CD8-positive, alpha-beta T cell (primary cell): ENCODE measurements at regions of chr6 and their contacts with region 1.

Region 1: DNA sequence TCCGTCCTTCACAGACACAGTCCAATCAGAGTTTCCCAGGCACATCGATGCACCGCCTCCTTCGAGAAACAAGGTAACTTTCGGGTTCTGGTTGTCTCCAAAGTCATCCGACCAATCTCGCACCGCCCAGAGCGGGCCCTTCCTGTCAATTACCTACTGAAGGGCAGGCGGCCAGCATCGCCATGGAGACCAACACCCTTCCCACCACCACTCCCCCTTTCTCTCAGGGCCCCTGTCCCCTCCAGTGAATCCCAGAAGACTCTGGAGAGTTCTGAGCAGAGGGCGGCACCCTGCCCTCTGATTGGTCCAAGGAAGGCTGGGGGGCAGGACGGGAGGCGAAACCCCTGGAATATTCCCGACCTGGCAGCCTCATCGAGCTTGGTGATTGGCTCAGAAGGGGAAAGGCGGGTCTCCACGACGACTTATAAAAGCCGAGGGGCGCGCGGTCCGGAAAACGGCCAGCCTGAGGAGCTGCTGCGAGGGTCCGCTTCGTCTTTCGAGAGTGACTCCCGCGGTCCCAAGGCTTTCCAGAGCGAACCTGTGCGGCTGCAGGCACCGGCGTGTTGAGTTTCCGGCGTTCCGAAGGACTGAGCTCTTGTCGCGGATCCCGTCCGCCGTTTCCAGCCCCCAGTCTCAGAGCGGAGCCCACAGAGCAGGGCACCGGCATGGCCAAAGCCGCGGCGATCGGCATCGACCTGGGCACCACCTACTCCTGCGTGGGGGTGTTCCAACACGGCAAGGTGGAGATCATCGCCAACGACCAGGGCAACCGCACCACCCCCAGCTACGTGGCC is at the start of gene HSPA1B:
- DNase-seq: peak; percentile 56 to 91 (median 85)
- ATAC-seq: peak; percentile 63
- H3K4me3 ChIP-seq: peak within 1 kb of the TSS; percentile 60 to 95
- H3K4me3 Mint-ChIP-seq: peak within 1 kb of the TSS; percentile 96
- H3K27ac ChIP-seq: peak within 1 kb of the TSS; percentile 66 to 72
- H3K27ac Mint-ChIP-seq: peak within 1 kb of the TSS; percentile 94
- H3K4me1 ChIP-seq: peaks cover 25% of the 10 kb centered on the region
- H3K4me1 Mint-ChIP-seq: peaks cover 38% of the 10 kb centered on the region
- H3K27me3 ChIP-seq: no peaks in the 10 kb centered on the region
- H3K27me3 Mint-ChIP-seq: no peaks in the 10 kb centered on the region
- CTCF ChIP-seq: no peak
- total RNA-seq, gene HSPA1B: 4.9 to 5.2 TPM

Region 2: GRCh38 chr6:31271641-31272357 is 555.7 kb before region 1 on chr6 and contains the start of gene HLA-C:
- CTCF ChIA-PET with region 1: no interaction called
- POLR2A ChIA-PET with region 1: no interaction called
- intact Hi-C with region 1: no loop called
- DNase-seq: peak; percentile 79 to 98 (median 92)
- ATAC-seq: peak; percentile 85
- H3K4me3 ChIP-seq: peak within 1 kb of the TSS; percentile 82 to 86
- H3K4me3 Mint-ChIP-seq: peak within 1 kb of the TSS; percentile 95
- H3K27ac ChIP-seq: peak within 1 kb of the TSS; percentile 93 to 98
- H3K27ac Mint-ChIP-seq: peak within 1 kb of the TSS; percentile 100
- H3K4me1 ChIP-seq: peaks cover 43% of the 10 kb centered on the region
- H3K4me1 Mint-ChIP-seq: peaks cover 56% of the 10 kb centered on the region
- H3K27me3 ChIP-seq: no peaks in the 10 kb centered on the region
- H3K27me3 Mint-ChIP-seq: no peaks in the 10 kb centered on the region
- CTCF ChIP-seq: no peak
- total RNA-seq, gene HLA-C: 2,677 to 2,722 TPM

Region 3: DNA sequence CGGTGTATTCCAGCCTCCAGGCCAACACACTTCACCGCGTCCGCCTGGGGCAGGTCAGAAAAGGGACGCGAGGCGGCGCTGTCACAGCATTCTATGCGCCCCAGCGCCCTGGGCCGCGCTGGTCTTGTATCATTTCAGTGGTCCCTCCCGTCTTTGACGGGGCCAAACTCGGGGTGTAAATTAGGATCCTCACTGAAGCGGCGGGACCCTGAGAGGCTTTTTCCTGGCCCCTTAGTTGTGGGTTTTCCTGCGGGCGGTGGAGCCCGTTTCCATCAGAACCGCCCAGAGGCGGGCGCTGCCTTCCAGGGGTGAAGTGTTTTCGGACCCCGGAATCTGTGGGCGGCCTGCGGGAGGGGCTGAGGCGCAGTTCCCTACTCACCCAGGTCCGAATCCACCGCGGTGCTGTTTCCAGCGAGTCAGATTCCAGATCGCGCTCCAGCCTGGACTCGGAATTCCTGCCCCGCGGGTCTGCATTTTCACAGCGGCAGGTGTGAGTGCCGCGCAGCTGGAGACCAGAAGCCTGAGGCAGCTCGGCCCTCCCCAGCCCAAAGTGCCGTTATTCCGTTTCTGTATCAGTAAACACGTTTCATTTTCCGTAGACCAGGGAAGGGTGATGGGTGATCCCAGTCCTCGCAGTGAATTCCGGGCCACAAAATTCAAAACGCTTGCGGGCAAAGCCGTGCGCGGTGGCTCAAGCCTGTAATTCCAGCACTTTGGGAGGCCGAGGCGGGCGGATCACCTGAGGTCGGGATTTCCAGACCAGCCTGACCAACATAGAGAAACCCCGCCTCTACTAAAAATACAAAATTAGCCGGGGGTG is 333.4 kb before region 1 on chr6:
- CTCF ChIA-PET with region 1: no interaction called
- POLR2A ChIA-PET with region 1: no interaction called
- intact Hi-C with region 1: loop called (anchors 2 to 5 kb)
- DNase-seq: peak; percentile 62 to 90 (median 76)
- ATAC-seq: peak; percentile 32
- H3K4me3 ChIP-seq: peak overlapping the region; percentile 65 to 81
- H3K4me3 Mint-ChIP-seq: peak overlapping the region; percentile 77
- H3K27ac ChIP-seq: peak overlapping the region; percentile 29 to 71
- H3K27ac Mint-ChIP-seq: peak overlapping the region; percentile 91
- H3K4me1 ChIP-seq: peaks cover 41% of the 10 kb centered on the region
- H3K4me1 Mint-ChIP-seq: peaks cover 49% of the 10 kb centered on the region
- H3K27me3 ChIP-seq: no peaks in the 10 kb centered on the region
- H3K27me3 Mint-ChIP-seq: no peaks in the 10 kb centered on the region
- CTCF ChIP-seq: peak; percentile 83

Region 4: GRCh38 chr6:31652925-31653718 is 174.4 kb before region 1 on chr6:
- CTCF ChIA-PET with region 1: interaction called, 9 read pairs
- POLR2A ChIA-PET with region 1: interaction called, 21 read pairs
- intact Hi-C with region 1: no loop called
- DNase-seq: peak in 4 of 9 experiments; percentile 77 to 92 (median 88)
- ATAC-seq: peak; percentile 70
- H3K4me3 ChIP-seq: peak overlapping the region; percentile 78 to 82
- H3K4me3 Mint-ChIP-seq: peak overlapping the region; percentile 92
- H3K27ac ChIP-seq: peak overlapping the region; percentile 94 to 96
- H3K27ac Mint-ChIP-seq: peak overlapping the region; percentile 100
- H3K4me1 ChIP-seq: peaks cover 32% of the 10 kb centered on the region
- H3K4me1 Mint-ChIP-seq: peaks cover 59% of the 10 kb centered on the region
- H3K27me3 ChIP-seq: no peaks in the 10 kb centered on the region
- H3K27me3 Mint-ChIP-seq: no peaks in the 10 kb centered on the region
- CTCF ChIP-seq: no peak

Region 5: DNA sequence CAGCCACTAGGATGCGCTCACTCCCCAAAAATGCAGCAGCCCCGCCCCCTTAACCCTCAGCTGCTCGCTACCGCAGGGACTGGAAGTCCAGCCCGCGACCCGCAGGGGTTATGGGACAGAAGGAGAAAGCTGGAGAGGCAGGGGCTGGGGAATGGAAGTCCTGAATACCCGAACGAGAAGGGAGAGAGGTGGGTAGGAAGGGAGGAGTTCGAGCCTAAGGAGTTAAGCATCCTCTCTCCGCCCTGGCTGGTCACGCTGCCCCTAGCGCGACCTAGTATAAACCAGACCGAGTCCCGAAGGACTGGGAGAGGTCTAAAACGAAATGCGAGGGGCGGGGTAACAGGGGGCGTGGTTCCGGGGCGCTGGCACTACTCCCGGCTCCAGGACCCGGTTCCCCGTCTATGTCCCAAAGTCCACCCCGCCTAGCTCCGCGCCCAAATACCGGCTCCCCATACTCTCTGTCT is 97.9 kb before region 1 on chr6:
- CTCF ChIA-PET with region 1: interaction called, 74 read pairs
- POLR2A ChIA-PET with region 1: interaction called, 12 read pairs
- intact Hi-C with region 1: loop called (anchors 1 kb)
- DNase-seq: peak; percentile 60 to 89 (median 83)
- ATAC-seq: peak; percentile 69
- H3K4me3 ChIP-seq: peak overlapping the region; percentile 79 to 96
- H3K4me3 Mint-ChIP-seq: peak overlapping the region; percentile 97
- H3K27ac ChIP-seq: peak overlapping the region; percentile 11 to 58
- H3K27ac Mint-ChIP-seq: peak overlapping the region; percentile 89
- H3K4me1 ChIP-seq: peaks cover 35% of the 10 kb centered on the region
- H3K4me1 Mint-ChIP-seq: peaks cover 57% of the 10 kb centered on the region
- H3K27me3 ChIP-seq: no peaks in the 10 kb centered on the region
- H3K27me3 Mint-ChIP-seq: no peaks in the 10 kb centered on the region
- CTCF ChIP-seq: peak; percentile 91

Region 6: GRCh38 chr6:31806465-31807272 is 20.8 kb before region 1 on chr6 and contains the start of gene LSM2:
- CTCF ChIA-PET with region 1: interaction called, 11 read pairs
- POLR2A ChIA-PET with region 1: interaction called, 6 read pairs
- intact Hi-C with region 1: loop called in 1 of 2 experiments (anchors 1 kb)
- DNase-seq: peak; percentile 92 to 99 (median 97)
- ATAC-seq: peak; percentile 99
- H3K4me3 ChIP-seq: peak within 1 kb of the TSS; percentile 61 to 95
- H3K4me3 Mint-ChIP-seq: peak within 1 kb of the TSS; percentile 87
- H3K27ac ChIP-seq: peak within 1 kb of the TSS; percentile 78 to 82
- H3K27ac Mint-ChIP-seq: peak within 1 kb of the TSS; percentile 94
- H3K4me1 ChIP-seq: peaks cover 8% of the 10 kb centered on the region
- H3K4me1 Mint-ChIP-seq: peaks cover 25% of the 10 kb centered on the region
- H3K27me3 ChIP-seq: no peaks in the 10 kb centered on the region
- H3K27me3 Mint-ChIP-seq: no peaks in the 10 kb centered on the region
- CTCF ChIP-seq: no peak
- total RNA-seq, gene LSM2: 19.6 to 26.4 TPM

Region 7: GRCh38 chr6:31862344-31863227 is 35.1 kb after region 1 on chr6 and contains the start of gene NEU1:
- CTCF ChIA-PET with region 1: interaction called, 5 read pairs
- POLR2A ChIA-PET with region 1: interaction called, 3 read pairs
- intact Hi-C with region 1: loop called in 1 of 2 experiments (anchors 2 kb)
- DNase-seq: peak; percentile 97 to 100 (median 98)
- ATAC-seq: peak; percentile 91
- H3K4me3 ChIP-seq: peak within 1 kb of the TSS; percentile 75 to 94
- H3K4me3 Mint-ChIP-seq: peak within 1 kb of the TSS; percentile 95
- H3K27ac ChIP-seq: peak within 1 kb of the TSS; percentile 77 to 97
- H3K27ac Mint-ChIP-seq: peak within 1 kb of the TSS; percentile 98
- H3K4me1 ChIP-seq: peaks cover 17% of the 10 kb centered on the region
- H3K4me1 Mint-ChIP-seq: peaks cover 23% of the 10 kb centered on the region
- H3K27me3 ChIP-seq: no peaks in the 10 kb centered on the region
- H3K27me3 Mint-ChIP-seq: no peaks in the 10 kb centered on the region
- CTCF ChIP-seq: no peak
- total RNA-seq, gene NEU1: 30.0 to 30.2 TPM